HepG2 (cell line): ENCODE measurements at regions of chr20 and their contacts with region 1.

Region 1: GRCh38 chr20:6828794-6829423 is 61.4 kb downstream of the BMP2 start:
- DNase-seq: peak; percentile 74
- ATAC-seq: peak; percentile 99
- H3K4me3 ChIP-seq: no peak overlapping the region
- H3K27ac ChIP-seq: no peak overlapping the region
- H3K4me1 ChIP-seq: no peaks in the 10 kb centered on the region
- H3K27me3 ChIP-seq: no peaks in the 10 kb centered on the region
- CTCF ChIP-seq: peak; percentile 81
- EP300 ChIP-seq: no peak; a peak in 1 of 4 replicates
- POLR2A ChIP-seq: no peak
- RAD21 ChIP-seq: peak; percentile 61

Region 2: GRCh38 chr20:6142348-6142993 is 686.4 kb before region 1 on chr20:
- CTCF ChIA-PET with region 1: no interaction called
- POLR2A ChIA-PET with region 1: no interaction called
- in situ Hi-C with region 1: no loop called
- intact Hi-C with region 1: loop called (anchors 2 kb)
- DNase-seq: peak; percentile 70
- ATAC-seq: peak; percentile 89
- H3K4me3 ChIP-seq: no peak overlapping the region
- H3K27ac ChIP-seq: no peak overlapping the region
- H3K4me1 ChIP-seq: no peaks in the 10 kb centered on the region
- H3K27me3 ChIP-seq: no peaks in the 10 kb centered on the region
- CTCF ChIP-seq: peak; percentile 87
- EP300 ChIP-seq: no peak
- POLR2A ChIP-seq: no peak
- RAD21 ChIP-seq: no peak; the same call in 1 of the 2 replicates

Region 3: DNA sequence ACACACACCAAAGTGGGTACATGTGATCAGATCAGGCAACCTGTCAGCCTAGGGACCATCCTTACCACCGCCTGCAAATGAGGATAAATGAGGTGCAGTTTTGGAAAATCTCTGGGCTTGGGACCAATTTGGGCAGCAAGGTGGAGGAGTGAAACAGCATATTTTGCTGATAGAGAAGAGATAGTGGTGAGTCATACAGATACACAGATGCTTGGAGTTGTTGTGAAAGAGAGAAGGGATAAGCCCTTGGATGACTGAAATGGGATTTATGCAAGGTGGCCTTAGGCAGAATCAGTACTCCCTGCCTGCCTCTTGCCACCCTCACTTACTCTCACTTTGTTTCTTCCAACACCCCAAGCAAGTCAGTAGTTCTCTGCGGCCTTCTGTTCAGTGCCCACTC is 26.7 kb before region 1 on chr20:
- CTCF ChIA-PET with region 1: no interaction called
- POLR2A ChIA-PET with region 1: no interaction called
- in situ Hi-C with region 1: no loop called
- intact Hi-C with region 1: no loop called
- DNase-seq: no peak
- ATAC-seq: no peak
- H3K4me3 ChIP-seq: no peak overlapping the region
- H3K27ac ChIP-seq: no peak overlapping the region
- H3K4me1 ChIP-seq: no peaks in the 10 kb centered on the region
- H3K27me3 ChIP-seq: no peaks in the 10 kb centered on the region
- CTCF ChIP-seq: no peak
- EP300 ChIP-seq: no peak
- POLR2A ChIP-seq: no peak
- RAD21 ChIP-seq: no peak

Region 4: GRCh38 chr20:6908673-6909072 is 79.8 kb after region 1 on chr20:
- CTCF ChIA-PET with region 1: no interaction called
- POLR2A ChIA-PET with region 1: no interaction called
- in situ Hi-C with region 1: no loop called
- intact Hi-C with region 1: no loop called
- DNase-seq: no peak
- ATAC-seq: no peak
- H3K4me3 ChIP-seq: no peak overlapping the region
- H3K27ac ChIP-seq: no peak overlapping the region
- H3K4me1 ChIP-seq: no peaks in the 10 kb centered on the region
- H3K27me3 ChIP-seq: no peaks in the 10 kb centered on the region
- CTCF ChIP-seq: no peak
- EP300 ChIP-seq: no peak
- POLR2A ChIP-seq: no peak
- RAD21 ChIP-seq: no peak

Region 5: GRCh38 chr20:7094438-7094997 is 265.6 kb after region 1 on chr20:
- CTCF ChIA-PET with region 1: interaction called, 3 read pairs
- POLR2A ChIA-PET with region 1: no interaction called
- in situ Hi-C with region 1: no loop called
- intact Hi-C with region 1: loop called (anchors 1 kb)
- DNase-seq: peak; percentile 43
- ATAC-seq: peak; percentile 76
- H3K4me3 ChIP-seq: no peak overlapping the region
- H3K27ac ChIP-seq: no peak overlapping the region
- H3K4me1 ChIP-seq: no peaks in the 10 kb centered on the region
- H3K27me3 ChIP-seq: no peaks in the 10 kb centered on the region
- CTCF ChIP-seq: peak; percentile 79
- EP300 ChIP-seq: no peak
- POLR2A ChIP-seq: no peak
- RAD21 ChIP-seq: peak; percentile 37; the same call in 1 of the 2 replicates

Region 6: GRCh38 chr20:7272512-7272911 is 443.6 kb after region 1 on chr20:
- CTCF ChIA-PET with region 1: no interaction called
- POLR2A ChIA-PET with region 1: no interaction called
- in situ Hi-C with region 1: no loop called
- intact Hi-C with region 1: loop called (anchors 5 kb)
- DNase-seq: no peak
- ATAC-seq: no peak
- H3K4me3 ChIP-seq: no peak overlapping the region
- H3K27ac ChIP-seq: no peak overlapping the region
- H3K4me1 ChIP-seq: no peaks in the 10 kb centered on the region
- H3K27me3 ChIP-seq: no peaks in the 10 kb centered on the region
- CTCF ChIP-seq: peak; percentile 42
- EP300 ChIP-seq: no peak
- POLR2A ChIP-seq: no peak
- RAD21 ChIP-seq: no peak

Region 7: GRCh38 chr20:7375905-7376304 is 547.0 kb after region 1 on chr20:
- CTCF ChIA-PET with region 1: no interaction called
- POLR2A ChIA-PET with region 1: no interaction called
- in situ Hi-C with region 1: no loop called
- intact Hi-C with region 1: loop called (anchors 2 kb)
- DNase-seq: peak; percentile 29
- ATAC-seq: no peak
- H3K4me3 ChIP-seq: no peak overlapping the region
- H3K27ac ChIP-seq: no peak overlapping the region
- H3K4me1 ChIP-seq: no peaks in the 10 kb centered on the region
- H3K27me3 ChIP-seq: no peaks in the 10 kb centered on the region
- CTCF ChIP-seq: 0 out of 2 replicates have a peak, but pooled peaks have one; percentile 29
- EP300 ChIP-seq: no peak
- POLR2A ChIP-seq: no peak
- RAD21 ChIP-seq: no peak